HepG2 (cell line): ENCODE measurements at regions of chr22 and their contacts with region 1.

Region 1: DNA sequence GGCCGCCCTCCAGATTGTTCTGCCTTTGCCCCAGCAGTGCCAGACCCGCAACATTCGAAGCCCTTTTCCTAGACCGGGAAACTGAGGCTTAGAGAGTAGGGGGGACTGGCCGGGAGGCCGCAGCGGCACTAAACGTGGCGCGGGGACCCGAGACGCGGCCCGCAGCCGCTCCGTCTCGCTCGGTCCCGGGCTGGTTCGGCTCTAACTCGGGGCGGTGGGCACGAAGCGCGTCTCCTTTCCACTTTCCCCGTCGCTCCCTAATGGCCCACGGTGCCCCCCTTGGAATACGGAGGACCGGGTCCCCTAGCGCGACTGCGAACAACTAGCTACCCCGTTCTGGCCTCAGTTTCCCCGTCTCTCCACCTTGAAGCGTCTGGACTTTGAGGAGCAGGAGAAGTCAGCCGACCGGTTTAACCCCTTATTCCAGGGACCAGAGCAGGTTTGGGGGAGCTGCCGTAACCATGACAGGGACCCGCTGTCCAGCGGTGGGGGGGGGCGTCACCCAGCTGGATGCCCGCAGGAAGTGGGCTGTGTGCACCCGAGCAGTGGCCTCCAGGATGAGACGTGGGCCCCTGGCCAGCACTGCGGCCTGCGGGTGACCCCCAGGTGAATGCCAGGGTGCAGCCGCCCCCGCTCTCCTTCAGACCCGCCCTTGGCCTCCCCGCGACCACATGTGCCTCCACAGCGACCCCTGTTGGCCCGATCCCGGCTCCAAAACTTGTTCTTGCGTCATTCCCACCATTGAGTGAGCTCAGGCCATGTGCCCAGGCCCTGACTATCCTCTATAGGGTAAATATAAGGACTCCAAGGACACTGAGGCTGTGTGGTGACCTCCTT is 1.1 kb downstream of the CDC42EP1 start:
- DNase-seq: peak; percentile 85
- ATAC-seq: peak; percentile 45
- H3K4me3 ChIP-seq: peak overlapping the region; percentile 91 to 98 (median 98)
- H3K27ac ChIP-seq: peak overlapping the region; percentile 91
- H3K4me1 ChIP-seq: peaks cover 81% of the 10 kb centered on the region
- H3K27me3 ChIP-seq: no peaks in the 10 kb centered on the region; a peak in 2 of 5 replicates
- CTCF ChIP-seq: peak; percentile 97
- EP300 ChIP-seq: peak; percentile 69 to 73; a peak in 3 of 4 replicates
- POLR2A ChIP-seq: peak; percentile 73 to 75
- RAD21 ChIP-seq: peak; percentile 85

Region 2: DNA sequence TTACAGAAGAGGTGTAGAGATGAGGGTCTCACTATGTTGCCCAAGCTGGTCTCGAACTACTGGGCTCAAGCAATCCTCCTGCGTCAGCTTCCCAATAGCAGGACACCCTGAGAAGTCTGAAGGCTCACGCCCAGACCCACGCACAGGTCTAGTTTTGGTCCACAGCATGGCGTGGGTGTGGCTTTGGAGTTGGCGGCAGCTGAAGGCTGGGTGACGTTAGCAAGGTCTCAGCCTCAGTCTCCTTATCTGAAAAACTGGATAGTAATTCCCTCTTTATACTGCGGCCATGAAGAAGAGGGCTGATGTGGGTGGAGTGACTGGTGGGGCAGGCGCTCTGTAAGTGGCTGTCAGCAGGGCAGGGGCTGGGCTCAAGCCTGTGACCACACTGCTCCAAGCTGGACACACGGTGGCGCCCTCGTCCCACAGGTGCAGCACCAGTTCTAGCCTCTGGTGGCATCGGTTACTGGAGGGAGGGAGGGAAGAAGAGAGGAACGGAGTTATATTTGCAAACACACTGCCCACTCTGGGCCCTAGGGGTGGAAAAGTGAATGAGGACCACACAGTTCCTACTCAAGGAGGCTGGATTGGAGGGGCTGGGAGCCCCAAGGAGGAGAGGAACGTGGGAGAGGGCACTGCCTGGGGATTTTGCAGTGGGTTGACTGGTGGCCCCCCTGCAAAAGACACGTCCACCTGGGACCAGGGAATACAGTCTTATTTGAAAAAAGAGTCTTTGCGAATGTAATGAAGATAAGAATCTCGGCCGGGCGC is 22.7 kb before region 1 on chr22:
- CTCF ChIA-PET with region 1: interaction called, 66 read pairs
- POLR2A ChIA-PET with region 1: interaction called, 976 read pairs
- in situ Hi-C with region 1: no loop called
- intact Hi-C with region 1: no loop called
- DNase-seq: peak; percentile 88
- ATAC-seq: peak; percentile 98
- H3K4me3 ChIP-seq: peak overlapping the region in 1 of 3 experiments; percentile 32; a peak in 2 of 6 replicates
- H3K27ac ChIP-seq: no peak overlapping the region
- H3K4me1 ChIP-seq: peaks cover 77% of the 10 kb centered on the region
- H3K27me3 ChIP-seq: 0 out of 5 replicates have a peak, but pooled peaks cover 0 to 2% of the 10 kb centered on the region in 2 experiments
- CTCF ChIP-seq: peak; percentile 100
- EP300 ChIP-seq: peak; percentile 27 to 36; a peak in 2 of 4 replicates
- POLR2A ChIP-seq: no peak
- RAD21 ChIP-seq: peak; percentile 99

Region 3: DNA sequence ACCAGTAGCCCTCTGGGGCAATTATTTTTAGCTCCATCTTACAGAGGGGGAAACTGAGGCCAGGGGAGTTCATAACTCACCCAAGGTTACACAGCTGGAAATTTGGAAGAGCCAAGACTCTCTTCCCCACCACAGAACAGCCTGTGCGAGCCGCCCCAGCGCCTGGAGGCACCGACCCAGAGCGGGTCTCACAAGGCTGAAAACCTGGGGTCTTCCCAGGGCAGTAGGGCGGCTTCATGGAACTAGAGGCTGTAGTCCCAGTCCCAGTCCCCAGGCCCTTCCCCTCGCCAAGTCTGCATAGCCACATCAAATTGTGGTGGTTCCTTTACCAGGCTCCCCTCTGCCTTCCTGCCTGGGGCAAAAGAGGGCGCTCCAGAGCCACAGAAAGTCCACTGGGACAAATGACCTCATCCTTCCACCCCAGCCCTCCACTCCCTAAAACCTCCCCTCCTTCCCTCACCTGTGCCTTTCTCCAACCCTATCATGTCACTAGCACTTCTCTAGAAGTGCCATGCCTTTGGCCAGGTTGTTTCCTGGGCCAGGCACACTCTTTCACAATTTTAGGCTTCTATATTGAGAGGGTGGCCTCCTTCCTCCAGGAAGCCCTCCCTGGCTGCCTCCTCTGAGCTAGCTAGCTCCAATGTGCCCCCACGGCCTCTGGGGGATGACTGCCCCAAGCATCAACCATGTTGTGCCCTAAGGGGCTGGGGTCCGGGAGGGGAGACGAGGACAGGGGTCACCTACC is 16.3 kb before region 1 on chr22:
- CTCF ChIA-PET with region 1: interaction called, 66 read pairs
- POLR2A ChIA-PET with region 1: interaction called, 976 read pairs
- in situ Hi-C with region 1: no loop called
- intact Hi-C with region 1: loop called (anchors 1 kb)
- DNase-seq: peak; percentile 81
- ATAC-seq: peak; percentile 55
- H3K4me3 ChIP-seq: peak overlapping the region; percentile 32 to 70 (median 39); a peak in 5 of 6 replicates
- H3K27ac ChIP-seq: peak overlapping the region; percentile 90
- H3K4me1 ChIP-seq: peaks cover 89% of the 10 kb centered on the region
- H3K27me3 ChIP-seq: no peaks in the 10 kb centered on the region
- CTCF ChIP-seq: peak; percentile 95
- EP300 ChIP-seq: no peak
- POLR2A ChIP-seq: no peak
- RAD21 ChIP-seq: peak; percentile 83; the same call in 1 of the 2 replicates